ENCODE measurements at regions of chr3 and their contacts with region 1.

Region 1: DNA sequence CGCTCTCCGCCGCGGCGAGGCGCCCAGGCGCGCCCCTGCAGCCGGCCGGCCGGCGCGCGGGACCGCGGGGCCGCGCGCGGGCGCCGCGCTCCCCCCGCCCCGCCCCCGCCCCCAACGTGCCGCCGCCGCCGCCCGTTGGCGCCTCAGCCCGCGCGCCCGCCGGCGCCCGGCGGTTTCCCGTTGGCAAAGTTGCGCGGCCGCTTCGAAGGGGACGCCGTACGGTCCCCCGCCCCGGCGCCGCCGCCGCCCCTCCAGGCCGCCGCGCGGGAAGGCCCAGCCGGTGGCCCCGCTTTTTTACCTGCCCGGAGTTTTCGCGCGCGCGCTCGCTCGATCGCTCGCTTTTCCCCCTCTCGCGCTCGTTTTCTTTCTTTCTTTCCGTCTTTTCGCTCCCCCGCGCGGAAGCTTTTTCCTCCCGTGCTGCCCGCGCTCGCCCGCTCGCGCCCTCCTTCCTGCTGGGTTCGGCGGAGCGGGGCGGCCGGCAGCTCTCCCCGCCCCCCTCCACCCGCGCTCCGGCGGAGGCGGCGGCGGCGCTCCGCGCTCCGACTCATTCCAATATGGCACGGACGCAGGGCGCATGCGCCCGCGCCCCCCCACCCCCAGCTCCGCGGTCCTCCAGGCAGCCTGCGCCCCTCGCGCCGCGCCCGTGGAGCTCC is at the start of gene SFMBT1:
- DNase-seq: peak; percentile 68
- H3K4me3 Mint-ChIP-seq: peak within 1 kb of the TSS; percentile 90
- H3K27ac Mint-ChIP-seq: peak within 1 kb of the TSS; percentile 90
- H3K4me1 Mint-ChIP-seq: peaks cover 42% of the 10 kb centered on the region
- H3K27me3 Mint-ChIP-seq: no peaks in the 10 kb centered on the region
- total RNA-seq, gene SFMBT1: 15.1 to 15.4 TPM

Region 2: DNA sequence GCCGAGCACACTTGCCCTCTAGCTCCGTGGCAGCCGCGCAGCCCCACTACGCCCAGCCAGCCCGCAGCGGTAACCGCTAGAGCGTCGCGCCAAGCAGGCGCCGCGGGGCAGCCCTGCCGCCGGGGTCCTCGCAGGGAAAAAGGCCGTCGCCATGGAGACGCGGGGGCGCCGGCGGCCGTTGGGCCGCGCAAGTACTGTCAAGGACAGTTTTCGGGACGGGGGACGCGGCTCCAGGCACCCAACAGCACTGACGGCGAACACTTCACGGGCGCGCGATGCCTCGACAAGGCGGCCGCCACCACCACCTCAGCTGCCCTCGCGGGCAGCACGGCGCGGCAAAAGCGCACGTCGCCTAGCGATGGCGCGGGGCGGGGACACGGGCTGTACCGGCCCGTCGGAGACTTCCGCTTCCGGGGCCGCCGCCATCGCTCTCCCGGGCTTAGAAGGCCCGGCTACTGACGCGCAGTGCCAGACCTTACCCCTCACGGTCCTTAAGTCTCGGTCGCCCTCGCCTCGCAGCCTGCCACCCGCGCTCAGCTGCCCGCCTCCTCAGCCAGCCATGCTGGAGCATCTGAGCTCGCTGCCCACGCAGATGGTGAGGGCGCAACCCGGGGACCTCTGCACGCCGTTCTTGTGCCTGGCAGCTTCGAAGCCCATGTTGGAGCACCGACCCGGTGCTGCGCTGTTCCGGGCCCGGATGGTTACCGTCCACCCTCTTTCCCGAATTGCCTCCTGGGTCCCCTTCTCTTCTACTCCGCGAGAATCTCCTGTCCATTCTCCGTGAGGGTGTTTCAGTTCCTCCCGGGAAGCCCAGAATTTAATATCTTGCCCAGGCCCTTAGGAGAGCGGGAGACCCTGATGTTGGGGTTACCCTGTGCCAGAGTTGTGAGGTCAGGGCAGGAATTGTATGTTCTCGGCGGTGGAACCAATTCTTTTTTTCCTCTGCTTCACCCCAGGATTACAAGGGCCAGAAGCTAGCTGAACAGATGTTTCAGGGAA is 339.7 kb before region 1 on chr3 and contains the starts of genes GLT8D1 and SPCS1:
- CTCF ChIA-PET with region 1: no interaction called
- intact Hi-C with region 1: loop called (anchors 1 kb)
- DNase-seq: peak; percentile 84
- H3K4me3 Mint-ChIP-seq: peak within 1 kb of the TSS; percentile 94
- H3K27ac Mint-ChIP-seq: peak within 1 kb of the TSS; percentile 88
- H3K4me1 Mint-ChIP-seq: peaks cover 31% of the 10 kb centered on the region
- H3K27me3 Mint-ChIP-seq: no peaks in the 10 kb centered on the region
- total RNA-seq, gene GLT8D1: 24.5 to 25.4 TPM
- total RNA-seq, gene SPCS1: 118 to 123 TPM

Region 3: DNA sequence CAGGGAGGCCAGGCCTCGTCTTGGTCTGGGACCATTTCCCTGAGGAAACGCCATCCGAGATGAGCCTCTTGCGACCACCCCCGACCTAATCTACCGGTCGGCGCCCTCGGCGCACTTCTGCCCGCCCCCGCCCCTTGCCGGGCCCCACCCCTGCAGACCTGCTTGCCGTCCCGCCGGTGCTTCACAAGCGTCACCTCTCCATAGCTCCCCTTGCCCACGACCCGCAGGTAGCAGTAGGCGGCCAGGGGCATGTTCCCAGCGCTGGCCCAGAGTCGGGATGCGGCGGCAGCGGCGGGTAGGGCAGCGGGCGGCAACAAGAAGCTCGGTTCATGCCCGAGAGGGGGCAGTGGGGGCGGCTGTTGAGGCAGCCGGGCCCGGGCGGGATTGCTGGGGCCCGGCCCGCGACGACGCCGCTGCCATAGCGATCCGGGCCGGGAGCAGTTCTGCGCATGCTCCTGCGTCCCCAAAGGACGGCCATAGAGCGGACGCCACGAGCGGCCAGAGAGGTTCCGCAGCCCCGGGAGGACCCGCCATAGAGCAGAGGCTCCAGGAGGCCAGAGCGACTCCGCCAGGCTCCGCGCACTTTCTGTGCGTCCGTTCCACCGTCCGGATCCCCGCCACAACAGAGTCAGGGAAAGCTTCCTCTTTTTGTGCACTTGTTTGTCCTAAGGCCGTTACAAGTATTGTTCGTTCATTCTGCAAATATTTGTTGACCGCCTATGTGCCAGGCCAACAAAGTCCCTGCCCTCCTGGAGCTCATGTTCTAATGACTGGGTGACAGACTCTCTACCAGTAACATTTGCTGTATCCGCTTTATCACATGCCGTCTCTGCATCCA is 274.9 kb before region 1 on chr3 and contains the start of gene NEK4:
- CTCF ChIA-PET with region 1: no interaction called
- intact Hi-C with region 1: loop called (anchors 2 kb)
- DNase-seq: peak; percentile 91
- H3K4me3 Mint-ChIP-seq: peak within 1 kb of the TSS; percentile 96
- H3K27ac Mint-ChIP-seq: peak within 1 kb of the TSS; percentile 93
- H3K4me1 Mint-ChIP-seq: peaks cover 20% of the 10 kb centered on the region
- H3K27me3 Mint-ChIP-seq: no peaks in the 10 kb centered on the region
- total RNA-seq, gene NEK4: 12.8 to 15.3 TPM

Region 4: GRCh38 chr3:52934630-52935530 is 110.8 kb before region 1 on chr3:
- CTCF ChIA-PET with region 1: no interaction called
- intact Hi-C with region 1: loop called (anchors 1 kb)
- DNase-seq: peak; percentile 76
- H3K4me3 Mint-ChIP-seq: no peak overlapping the region
- H3K27ac Mint-ChIP-seq: no peak overlapping the region
- H3K4me1 Mint-ChIP-seq: peaks cover 10% of the 10 kb centered on the region
- H3K27me3 Mint-ChIP-seq: no peaks in the 10 kb centered on the region